ENCODE measurements at regions of chrX and their contacts with region 1.

Region 1: GRCh38 chrX:100609591-100609990 is 24.9 kb downstream of the TNMD start:
- DNase-seq: no peak
- H3K4me3 Mint-ChIP-seq: no peak overlapping the region
- H3K27ac Mint-ChIP-seq: no peak overlapping the region
- H3K4me1 Mint-ChIP-seq: no peaks in the 10 kb centered on the region
- H3K27me3 Mint-ChIP-seq: no peaks in the 10 kb centered on the region
- CTCF ChIP-seq: no peak

Region 2: DNA sequence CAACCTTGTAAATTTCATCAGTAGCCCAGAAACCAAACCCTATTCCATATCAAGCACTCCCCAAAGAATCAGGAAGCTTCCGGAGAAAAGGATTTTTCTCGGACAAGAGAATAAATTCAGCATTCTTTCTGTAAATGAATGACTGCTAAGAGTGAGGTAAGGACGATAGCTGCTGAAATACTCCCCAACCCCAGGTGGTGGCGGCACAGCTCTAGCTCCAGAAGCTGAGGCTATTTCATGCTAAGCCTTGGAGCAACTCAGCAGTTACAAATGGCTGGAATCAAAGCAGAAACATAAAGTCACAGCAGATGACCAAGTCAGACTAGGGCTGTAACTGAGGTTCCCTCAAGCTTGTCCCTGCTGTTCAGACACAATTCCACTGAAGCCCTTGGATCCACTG is 185.6 kb before region 1 on chrX:
- CTCF ChIA-PET with region 1: no interaction called
- intact Hi-C with region 1: loop called (anchors 10 kb)
- DNase-seq: peak; percentile 14
- H3K4me3 Mint-ChIP-seq: no peak overlapping the region
- H3K27ac Mint-ChIP-seq: no peak overlapping the region
- H3K4me1 Mint-ChIP-seq: no peaks in the 10 kb centered on the region
- H3K27me3 Mint-ChIP-seq: peaks cover 8% of the 10 kb centered on the region
- CTCF ChIP-seq: no peak